A549 (cell line): ENCODE measurements at regions of chr9 and their contacts with region 1.

Region 1: DNA sequence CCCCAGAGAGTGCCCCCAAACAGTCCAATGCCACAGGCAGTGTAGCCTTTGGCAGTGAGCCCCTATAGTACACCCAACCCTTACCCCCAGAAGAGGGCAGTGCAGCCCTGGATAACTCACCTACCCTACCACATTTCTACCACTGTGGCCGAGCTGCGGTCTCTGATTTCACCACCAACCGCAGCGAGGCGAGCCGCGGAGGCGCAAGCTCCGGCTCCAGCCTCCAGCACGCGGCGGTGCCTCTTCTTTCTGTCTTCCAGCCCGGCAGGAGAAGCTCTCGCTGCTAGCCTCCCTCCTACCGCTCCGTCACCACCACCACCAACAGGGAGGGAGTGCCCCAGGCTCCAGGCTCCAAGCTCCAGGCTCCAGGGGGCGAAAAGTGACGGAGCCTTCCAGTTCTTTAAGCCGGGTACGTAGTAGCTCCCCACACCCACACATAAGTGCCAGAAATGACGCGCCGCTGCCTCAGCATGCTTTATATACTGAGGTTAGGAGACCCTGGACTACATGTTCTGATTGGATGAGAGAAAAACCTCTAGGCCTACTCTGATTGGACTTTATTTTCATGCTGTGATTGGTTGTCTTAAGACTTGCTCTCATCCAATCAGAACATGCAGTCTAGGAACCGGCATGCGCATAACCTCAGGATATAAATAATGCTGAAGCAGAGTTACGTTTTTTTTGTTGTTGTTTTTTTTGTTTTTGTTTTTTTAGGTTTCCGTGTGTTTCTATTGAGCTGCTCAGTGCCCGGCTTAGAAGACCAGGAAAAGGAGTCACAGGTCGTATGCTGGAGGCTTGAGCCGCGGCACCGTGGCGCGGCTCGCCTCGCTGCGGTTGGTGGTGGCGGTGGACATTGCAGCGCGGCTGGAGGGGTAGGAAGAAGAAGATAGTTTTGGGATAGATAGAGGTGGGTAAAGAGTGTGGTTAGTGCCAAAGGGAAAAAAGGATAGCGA is at the start of gene PCAT7:
- DNase-seq: peak; percentile 64 to 88
- ATAC-seq: peak; percentile 99
- H3K4me3 ChIP-seq: peak within 1 kb of the TSS; percentile 63
- H3K27ac ChIP-seq: peak within 1 kb of the TSS; percentile 80 to 87
- H3K4me1 ChIP-seq: peaks cover 8% of the 10 kb centered on the region; the same call in 1 of the 3 replicates
- CTCF ChIP-seq: peak; percentile 86
- EP300 ChIP-seq: no peak
- POLR2A ChIP-seq: peak; percentile 71
- RAD21 ChIP-seq: peak; percentile 78 to 88
- polyA plus RNA-seq, gene PCAT7: 2.7 and 2.8 TPM in 2 replicates

Region 2: DNA sequence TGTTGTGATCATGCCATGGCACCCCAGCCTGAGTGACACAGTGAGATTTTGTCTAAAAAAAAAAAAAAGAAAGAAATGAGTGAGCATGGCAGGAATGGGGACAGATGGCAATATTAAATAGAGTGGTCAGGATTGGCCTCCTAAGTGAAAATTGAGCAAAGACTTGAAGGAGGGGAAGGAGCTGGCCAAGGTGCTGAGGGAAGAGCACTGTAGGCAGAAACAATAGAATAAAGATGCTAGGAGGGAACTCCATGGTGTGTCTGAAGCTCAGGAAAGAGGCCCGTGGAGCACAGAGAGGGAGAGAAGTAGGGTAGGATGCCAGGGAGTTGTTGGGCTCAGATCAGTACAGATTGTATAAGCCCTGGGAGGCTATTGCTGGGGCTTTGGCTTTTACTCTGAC is 64.2 kb before region 1 on chr9:
- CTCF ChIA-PET with region 1: no interaction called
- POLR2A ChIA-PET with region 1: no interaction called
- DNase-seq: no peak
- ATAC-seq: no peak
- H3K4me3 ChIP-seq: no peak overlapping the region
- H3K27ac ChIP-seq: no peak overlapping the region
- H3K4me1 ChIP-seq: no peaks in the 10 kb centered on the region
- CTCF ChIP-seq: no peak
- EP300 ChIP-seq: no peak
- POLR2A ChIP-seq: no peak
- RAD21 ChIP-seq: no peak

Region 3: GRCh38 chr9:94603259-94604160 is 48.8 kb after region 1 on chr9:
- CTCF ChIA-PET with region 1: interaction called, 29 read pairs
- POLR2A ChIA-PET with region 1: interaction called, 3 read pairs
- DNase-seq: peak; percentile 77 to 94
- ATAC-seq: peak; percentile 90 to 96
- H3K4me3 ChIP-seq: no peak overlapping the region
- H3K27ac ChIP-seq: no peak overlapping the region
- H3K4me1 ChIP-seq: no peaks in the 10 kb centered on the region
- CTCF ChIP-seq: peak; percentile 71
- EP300 ChIP-seq: no peak
- POLR2A ChIP-seq: no peak
- RAD21 ChIP-seq: peak; percentile 68 to 75

Region 4: DNA sequence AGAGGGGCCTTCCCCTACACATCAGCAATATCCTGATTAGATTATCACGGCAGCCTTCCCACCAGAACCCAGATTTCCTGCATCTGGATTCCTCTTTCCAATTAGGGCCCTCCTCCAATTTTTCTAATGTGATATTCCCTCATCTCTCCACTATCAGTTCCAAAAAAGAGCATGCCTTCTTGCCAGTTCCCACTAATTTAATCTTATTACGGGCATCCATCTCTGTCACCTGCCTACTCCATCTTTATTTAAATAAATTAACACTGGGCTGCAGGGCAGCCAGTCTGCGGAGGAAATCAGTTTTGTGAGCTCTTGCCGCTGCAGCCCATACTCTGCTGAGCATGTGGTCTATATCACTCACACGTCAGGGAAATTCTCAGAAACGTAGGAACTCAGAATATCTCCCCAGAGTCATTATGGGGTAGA is 55.5 kb after region 1 on chr9:
- CTCF ChIA-PET with region 1: interaction called, 15 read pairs
- POLR2A ChIA-PET with region 1: no interaction called
- DNase-seq: no peak
- ATAC-seq: no peak
- H3K4me3 ChIP-seq: no peak overlapping the region
- H3K27ac ChIP-seq: no peak overlapping the region
- H3K4me1 ChIP-seq: no peaks in the 10 kb centered on the region
- CTCF ChIP-seq: no peak
- EP300 ChIP-seq: no peak
- POLR2A ChIP-seq: no peak
- RAD21 ChIP-seq: no peak

Region 5: DNA sequence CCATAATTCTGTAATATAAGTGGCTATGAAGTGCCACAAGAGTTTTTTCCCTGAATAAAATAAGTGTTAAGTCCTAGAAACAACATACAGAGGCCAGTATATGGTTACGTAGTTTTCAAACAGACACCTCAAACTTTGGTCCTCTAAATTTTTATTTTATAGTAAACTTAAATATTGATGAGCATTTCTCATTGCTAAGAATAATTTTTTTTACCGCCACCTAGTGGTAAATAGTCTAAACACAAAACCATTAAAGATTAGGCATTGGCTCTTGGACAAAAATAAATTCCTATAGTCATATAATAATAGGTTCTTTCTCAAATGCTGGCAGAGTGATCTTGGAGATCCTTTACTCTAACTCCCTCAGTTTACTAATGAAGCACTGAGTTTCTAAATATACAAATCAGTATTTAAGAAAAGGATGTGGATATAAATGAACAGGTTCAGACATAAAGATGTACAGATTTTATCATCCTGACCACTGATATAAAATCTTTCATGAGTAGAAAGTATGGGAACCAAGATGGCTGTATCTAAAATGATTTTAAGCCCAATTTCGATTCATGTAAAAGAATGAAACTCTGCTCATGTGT is 626.6 kb after region 1 on chr9:
- CTCF ChIA-PET with region 1: interaction called, 12 read pairs
- POLR2A ChIA-PET with region 1: no interaction called
- DNase-seq: peak in 1 of 2 experiments; percentile 34
- ATAC-seq: no peak
- H3K4me3 ChIP-seq: no peak overlapping the region
- H3K27ac ChIP-seq: no peak overlapping the region
- H3K4me1 ChIP-seq: no peaks in the 10 kb centered on the region
- CTCF ChIP-seq: peak; percentile 57
- EP300 ChIP-seq: no peak
- POLR2A ChIP-seq: no peak
- RAD21 ChIP-seq: no peak; a peak in 1 of 5 replicates